Transverse colon (tissue), 4 donors: ENCODE measurements at regions of chr11 and their contacts with region 1.

Region 1: DNA sequence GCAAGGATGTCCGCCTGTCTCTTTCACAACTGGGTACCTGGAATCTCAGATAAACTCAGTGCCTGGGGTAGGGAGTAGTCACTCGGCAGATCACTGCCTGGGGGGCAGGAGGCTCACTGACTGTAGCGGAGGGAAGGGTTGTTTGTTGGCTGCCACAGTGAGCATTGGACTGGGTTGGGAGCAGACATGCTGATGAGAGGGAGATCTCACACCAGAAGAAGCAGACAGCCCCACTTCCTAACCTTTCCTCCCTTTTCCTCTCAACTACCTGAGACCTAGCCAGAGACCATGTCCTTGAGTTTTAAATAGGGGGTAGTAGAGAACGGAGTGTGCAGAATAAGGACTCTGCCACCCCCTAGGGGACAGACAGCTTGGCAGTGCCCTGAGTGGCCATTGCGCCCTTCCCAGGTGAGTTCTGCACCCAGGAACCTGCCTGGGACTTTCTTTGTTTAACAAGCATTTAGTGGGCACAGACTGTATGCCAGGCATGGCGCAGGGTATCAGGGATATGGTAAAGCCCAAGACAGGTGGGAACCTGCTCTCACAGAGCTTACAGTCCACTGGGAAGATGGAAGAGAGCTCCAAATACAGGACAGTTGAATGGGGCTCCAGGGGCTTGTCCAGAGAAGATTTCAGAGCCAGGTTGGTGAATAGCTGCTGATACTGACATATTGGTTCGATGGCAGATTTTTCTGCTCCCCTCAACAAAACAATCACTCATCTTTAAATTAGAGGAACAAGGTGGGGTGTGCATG is 115.7 kb upstream of the NNMT start:
- DNase-seq: peak; percentile 80
- H3K4me3 ChIP-seq: peak overlapping the region in 2 of 4 donors; percentile 21 to 30
- H3K27ac ChIP-seq: peak overlapping the region; percentile 94 to 96 (median 96)
- H3K4me1 ChIP-seq: peaks cover 50 to 82% (median 80%) of the 10 kb centered on the region in 4 donors
- H3K27me3 ChIP-seq: no peaks in the 10 kb centered on the region
- CTCF ChIP-seq: peak; percentile 55 to 74 (median 63)
- EP300 ChIP-seq: no peak
- POLR2A ChIP-seq: no peak

Region 2: DNA sequence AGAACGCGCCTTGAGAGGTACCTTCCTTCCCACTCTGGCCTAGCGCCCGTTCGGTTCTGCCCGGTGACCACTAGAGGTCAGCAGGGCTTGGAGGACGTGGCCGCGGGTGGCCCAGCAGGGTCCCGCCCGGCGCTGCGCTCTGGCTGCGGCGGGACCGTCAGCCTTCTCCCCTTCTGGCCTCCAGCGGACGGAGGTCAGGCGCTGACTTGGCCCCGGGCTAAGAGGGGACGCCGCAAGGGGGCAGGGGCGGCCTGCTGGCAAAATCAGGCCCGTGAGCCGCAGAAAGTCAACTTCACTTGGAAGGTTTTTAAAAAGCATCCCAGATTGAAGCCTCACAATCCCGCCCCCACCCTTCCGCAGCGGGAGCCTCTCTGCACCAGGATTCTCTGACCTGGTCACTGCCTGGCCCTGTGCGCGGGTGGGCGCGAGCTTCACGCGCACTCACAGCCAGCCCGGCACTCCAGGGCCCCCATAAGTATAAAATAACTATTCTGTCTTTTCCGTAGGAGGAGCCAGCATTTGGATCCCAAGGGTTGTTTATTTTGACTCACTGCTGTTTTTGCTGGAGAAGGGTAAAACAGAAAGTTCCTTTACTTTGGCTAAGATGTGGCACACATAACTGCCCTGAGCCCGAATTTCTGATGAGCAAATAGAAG is 144.2 kb before region 1 on chr11:
- in situ Hi-C with region 1: loop called in 2 of 4 experiments (anchors 10 to 25 kb)
- intact Hi-C with region 1: no loop called
- DNase-seq: peak; percentile 88
- H3K4me3 ChIP-seq: peak overlapping the region in 3 of 4 donors; percentile 21 to 38 (median 29)
- H3K27ac ChIP-seq: peak overlapping the region; percentile 56 to 75 (median 62)
- H3K4me1 ChIP-seq: peaks cover 11 to 29% (median 25%) of the 10 kb centered on the region in 4 donors
- H3K27me3 ChIP-seq: no peaks in the 10 kb centered on the region
- CTCF ChIP-seq: peak; percentile 85 to 93 (median 88)
- EP300 ChIP-seq: no peak
- POLR2A ChIP-seq: no peak

Region 3: DNA sequence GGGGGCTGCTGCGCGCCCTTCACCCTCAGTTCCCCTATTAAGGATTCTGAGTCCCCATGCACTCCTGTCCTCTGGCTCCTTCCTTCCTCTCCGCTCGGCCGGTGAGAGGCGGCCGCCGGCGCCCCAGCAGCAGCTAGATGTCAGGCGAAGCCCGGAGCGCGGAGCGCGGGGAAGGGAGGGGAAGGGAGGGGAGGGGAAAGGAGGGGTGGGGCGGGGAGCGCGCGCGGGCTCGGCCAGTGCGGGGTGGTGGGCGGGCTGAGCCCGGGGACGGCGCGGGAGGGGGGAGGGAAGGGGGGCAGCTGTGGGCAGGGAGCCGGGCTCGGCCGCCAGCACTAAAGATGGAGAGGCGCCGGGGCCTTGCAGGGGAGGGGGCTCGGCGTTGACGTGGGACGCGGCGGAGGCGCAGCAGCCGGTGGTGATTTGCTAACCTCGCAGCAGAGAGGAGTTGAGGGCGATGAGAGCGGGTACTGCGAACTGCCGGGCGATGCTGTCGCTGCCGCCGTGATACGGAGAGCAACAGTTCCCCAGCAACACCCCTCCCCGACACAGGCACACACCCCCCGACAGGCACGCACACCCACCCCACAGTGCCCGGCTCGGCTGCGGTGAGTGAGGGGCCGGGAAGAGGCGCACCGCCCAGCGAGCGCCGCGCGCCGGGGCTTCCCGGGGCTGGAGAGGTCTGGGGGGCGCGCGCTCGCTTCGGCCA is 121.0 kb before region 1 on chr11 and contains the start of gene ZBTB16:
- in situ Hi-C with region 1: loop called in 2 of 4 experiments (anchors 10 kb)
- intact Hi-C with region 1: loop called (anchors 5 kb)
- DNase-seq: peak; percentile 88
- H3K4me3 ChIP-seq: peak within 1 kb of the TSS; percentile 71 to 96 (median 86)
- H3K27ac ChIP-seq: peak within 1 kb of the TSS; percentile 92 to 97 (median 96)
- H3K4me1 ChIP-seq: peaks cover 6 to 37% (median 31%) of the 10 kb centered on the region in 4 donors
- H3K27me3 ChIP-seq: peaks cover 12% of the 10 kb centered on the region
- CTCF ChIP-seq: peak in 3 of 5 experiments; percentile 19 to 38 (median 25)
- EP300 ChIP-seq: peak; percentile 38
- POLR2A ChIP-seq: peak; percentile 85
- total RNA-seq, gene ZBTB16: 108 to 271 (median 155) TPM

Region 4: DNA sequence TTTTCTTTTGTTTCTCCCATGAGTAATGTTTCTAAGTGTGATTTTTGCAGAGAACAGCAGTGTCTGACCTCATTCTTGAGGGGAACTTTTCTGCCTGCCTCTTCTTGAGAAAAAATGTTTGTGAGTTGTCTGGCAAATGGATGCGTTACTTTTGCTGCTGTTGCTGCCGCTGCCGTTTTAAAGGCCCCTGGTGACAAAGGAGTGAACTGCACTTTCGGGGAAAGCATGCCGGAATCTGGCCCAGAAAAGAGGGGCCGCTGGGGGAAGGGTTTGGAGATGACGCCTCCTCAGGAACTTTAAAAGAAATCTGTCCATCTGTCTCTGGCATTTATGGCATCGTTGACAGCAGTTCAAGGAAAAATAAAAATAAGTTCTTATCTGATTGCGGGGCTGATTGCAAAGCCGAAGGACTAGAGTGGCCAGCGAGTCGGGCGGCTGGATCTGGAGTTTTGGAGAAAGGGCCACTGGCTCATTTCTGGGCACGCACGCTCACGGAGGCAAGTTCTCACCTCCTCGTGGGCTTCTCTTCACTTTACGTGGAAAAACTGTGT is 104.5 kb before region 1 on chr11:
- in situ Hi-C with region 1: loop called in 1 of 4 experiments (anchors 10 kb)
- intact Hi-C with region 1: no loop called
- DNase-seq: no peak
- H3K4me3 ChIP-seq: peak overlapping the region in 1 of 4 donors; percentile 22
- H3K27ac ChIP-seq: peak overlapping the region; percentile 39 to 48 (median 46)
- H3K4me1 ChIP-seq: peaks cover 53 to 93% (median 87%) of the 10 kb centered on the region in 4 donors
- H3K27me3 ChIP-seq: no peaks in the 10 kb centered on the region
- CTCF ChIP-seq: peak; percentile 51 to 64 (median 60)
- EP300 ChIP-seq: no peak
- POLR2A ChIP-seq: no peak

Region 5: DNA sequence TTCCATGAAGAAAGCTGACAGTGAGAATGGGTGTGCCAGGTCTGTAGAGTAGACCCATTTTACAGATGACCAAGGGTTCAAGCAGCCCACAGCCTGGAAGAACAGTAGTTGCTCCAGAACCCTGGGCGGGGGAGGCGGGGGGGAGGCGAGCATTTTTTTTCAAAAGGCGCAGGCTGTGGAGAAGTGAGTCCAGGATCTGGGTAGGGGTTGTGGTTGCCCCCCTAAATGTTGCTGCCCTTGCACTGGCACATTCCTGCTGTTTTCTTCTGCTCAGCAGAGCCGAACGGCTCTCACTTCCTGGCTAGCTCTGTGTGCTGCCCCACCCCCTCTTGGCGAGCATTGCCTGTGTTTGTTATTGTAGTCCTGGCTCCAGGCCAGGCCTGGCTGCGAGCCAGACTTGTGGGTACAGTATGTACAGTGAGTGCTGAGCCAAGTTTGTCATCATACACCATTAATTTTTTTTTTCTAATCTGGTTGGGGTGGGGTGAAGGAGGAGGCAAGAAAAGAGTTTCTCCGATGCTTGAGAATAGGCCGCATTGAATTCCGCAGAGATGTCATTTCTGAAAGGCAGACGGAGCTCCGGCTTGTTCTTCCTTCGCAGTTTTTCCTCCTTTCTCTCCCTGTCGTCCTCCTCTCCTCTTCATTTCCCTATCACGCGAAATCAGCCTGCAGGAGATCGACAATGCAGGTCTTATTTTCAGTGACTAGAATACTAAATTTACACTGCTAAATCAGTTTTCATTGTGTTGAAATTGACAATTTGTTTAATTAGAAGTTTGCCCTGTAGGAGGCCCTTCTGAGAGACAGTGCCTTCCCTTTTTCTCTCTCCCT is 20.5 kb before region 1 on chr11:
- in situ Hi-C with region 1: no loop called
- intact Hi-C with region 1: loop called (anchors 2 kb)
- DNase-seq: peak; percentile 99
- H3K4me3 ChIP-seq: peak overlapping the region in 1 of 4 donors; percentile 30
- H3K27ac ChIP-seq: peak overlapping the region; percentile 94 to 96 (median 96)
- H3K4me1 ChIP-seq: peaks cover 74 to 83% (median 79%) of the 10 kb centered on the region in 4 donors
- H3K27me3 ChIP-seq: no peaks in the 10 kb centered on the region
- CTCF ChIP-seq: peak in 2 of 5 experiments; percentile 2 to 24
- EP300 ChIP-seq: peak; percentile 100
- POLR2A ChIP-seq: peak; percentile 71

Region 6: DNA sequence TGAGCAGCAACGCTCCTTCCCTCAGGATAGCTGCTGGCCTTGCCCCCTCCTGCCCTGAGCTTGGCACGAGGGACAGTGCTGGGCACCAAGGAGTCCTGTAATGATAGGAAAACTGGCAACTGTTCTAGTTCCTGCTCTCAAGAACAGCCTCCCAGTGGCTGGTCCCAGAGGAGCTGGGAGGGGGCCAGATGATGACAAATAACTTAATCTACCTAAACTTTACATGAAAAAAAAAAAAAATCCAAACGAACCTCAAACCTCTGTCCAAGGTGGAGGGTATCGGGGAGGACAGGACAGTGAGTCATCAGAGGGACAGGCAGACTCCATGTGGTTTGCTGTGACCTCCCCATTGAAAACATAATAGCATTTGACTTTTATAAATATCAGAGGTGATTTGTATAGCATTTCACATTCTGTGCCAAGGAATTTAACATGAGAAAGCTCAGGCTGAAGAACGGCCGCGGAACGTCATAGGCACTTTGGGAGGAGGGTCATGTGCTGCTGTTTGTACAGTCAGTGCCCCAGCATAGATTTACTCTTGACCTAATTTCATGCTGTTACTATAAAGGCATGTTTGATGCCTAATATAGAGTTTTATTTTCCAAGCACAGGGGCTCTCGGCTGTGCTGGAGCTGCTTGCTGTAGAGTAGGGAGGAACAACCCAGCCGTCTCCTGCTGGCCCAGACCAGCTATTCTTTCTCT is 17.5 kb after region 1 on chr11:
- in situ Hi-C with region 1: no loop called
- intact Hi-C with region 1: loop called (anchors 2 kb)
- DNase-seq: peak; percentile 63
- H3K4me3 ChIP-seq: no peak overlapping the region
- H3K27ac ChIP-seq: peak overlapping the region; percentile 84 to 91 (median 88)
- H3K4me1 ChIP-seq: peaks cover 32 to 76% (median 43%) of the 10 kb centered on the region in 4 donors
- H3K27me3 ChIP-seq: no peaks in the 10 kb centered on the region
- CTCF ChIP-seq: no peak
- EP300 ChIP-seq: peak; percentile 99
- POLR2A ChIP-seq: peak; percentile 28

Region 7: DNA sequence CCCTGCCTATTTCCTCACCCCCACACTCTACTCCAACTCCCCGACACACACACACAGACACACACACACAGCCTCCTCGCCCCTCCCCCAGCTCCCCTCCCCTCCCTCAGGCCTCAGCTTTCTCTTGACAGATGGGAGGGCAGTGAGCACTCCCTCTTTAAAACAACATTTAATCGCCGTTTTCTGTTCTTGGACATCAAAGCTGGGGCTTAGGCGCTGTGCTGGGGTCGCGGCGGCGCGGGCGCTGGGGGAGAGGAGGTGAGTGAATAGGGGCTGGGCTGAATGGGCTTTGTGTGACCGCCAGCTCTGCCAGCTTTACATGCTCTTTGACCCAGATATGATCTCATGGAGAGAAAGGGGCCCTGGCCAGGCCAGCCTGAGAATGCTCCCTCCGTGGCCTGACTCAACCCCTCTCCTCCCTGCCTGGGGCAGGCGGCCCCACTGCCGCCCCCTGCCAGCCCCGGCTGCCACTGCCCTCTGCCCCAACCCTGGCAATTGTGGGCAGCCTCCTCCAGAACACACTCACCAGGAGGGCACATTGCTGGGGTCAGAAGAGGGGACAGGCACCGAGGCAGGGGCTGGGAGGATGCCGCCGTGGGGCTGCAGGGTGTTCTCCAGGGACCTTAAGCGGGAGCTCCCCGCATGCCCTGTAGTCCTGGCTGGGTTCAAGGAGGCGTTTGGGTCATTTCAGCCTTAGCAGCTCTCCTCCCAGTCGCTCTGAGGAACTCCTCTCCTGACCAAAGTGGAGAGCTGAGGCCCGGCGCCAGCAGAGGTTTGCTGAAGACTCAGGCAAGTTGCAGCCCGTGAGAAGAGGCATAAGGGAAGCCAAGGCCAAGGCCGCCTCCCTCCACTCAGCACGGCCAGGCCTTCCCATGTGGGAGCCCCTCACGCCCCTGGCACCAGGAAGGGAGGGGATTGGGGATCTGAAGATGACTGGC is 77.4 kb after region 1 on chr11:
- in situ Hi-C with region 1: no loop called
- intact Hi-C with region 1: loop called (anchors 10 kb)
- DNase-seq: no peak
- H3K4me3 ChIP-seq: no peak overlapping the region
- H3K27ac ChIP-seq: peak overlapping the region; percentile 36 to 76 (median 72)
- H3K4me1 ChIP-seq: peaks cover 0 to 44% (median 26%) of the 10 kb centered on the region in 4 donors
- H3K27me3 ChIP-seq: no peaks in the 10 kb centered on the region
- CTCF ChIP-seq: no peak
- EP300 ChIP-seq: no peak
- POLR2A ChIP-seq: no peak